Activated T-helper 1 cell treated with anti-CD3 and anti-CD28 coated beads, Interleukin-12 subunit alpha, Interleukin-12 subunit beta, Interleukin-2, Interleukin-4 antibody, amounts not matched to agents 30 ng/mL and 10 ng/mL and 1 ng/mL, durations not matched to agents 14 hours and 24 hours and 36 hours (primary cell): ENCODE measurements at regions of chrX and their contacts with region 1.

Region 1: GRCh38 chrX:119606280-119607015 is at the start of gene NKRF:
- DNase-seq: peak; percentile 86
- H3K4me3 Mint-ChIP-seq: peak within 1 kb of the TSS; percentile 96
- H3K27ac Mint-ChIP-seq: peak within 1 kb of the TSS; percentile 97
- H3K4me1 Mint-ChIP-seq: peaks cover 30% of the 10 kb centered on the region
- H3K27me3 Mint-ChIP-seq: no peaks in the 10 kb centered on the region
- total RNA-seq, gene NKRF: 26.8 and 29.0 TPM in 2 replicates

Region 2: GRCh38 chrX:119468930-119469635 is 137.4 kb before region 1 on chrX:
- intact Hi-C with region 1: loop called (anchors 1 kb)
- DNase-seq: peak; percentile 83
- H3K4me3 Mint-ChIP-seq: peak overlapping the region; percentile 90
- H3K27ac Mint-ChIP-seq: peak overlapping the region; percentile 93
- H3K4me1 Mint-ChIP-seq: peaks cover 12% of the 10 kb centered on the region
- H3K27me3 Mint-ChIP-seq: no peaks in the 10 kb centered on the region

Region 3: GRCh38 chrX:119565107-119565663 is 41.3 kb before region 1 on chrX and contains the start of gene STEEP1:
- intact Hi-C with region 1: loop called (anchors 2 kb)
- DNase-seq: peak; percentile 80
- H3K4me3 Mint-ChIP-seq: peak within 1 kb of the TSS; percentile 93
- H3K27ac Mint-ChIP-seq: peak within 1 kb of the TSS; percentile 92
- H3K4me1 Mint-ChIP-seq: peaks cover 15% of the 10 kb centered on the region
- H3K27me3 Mint-ChIP-seq: peaks cover 2% of the 10 kb centered on the region
- total RNA-seq, gene STEEP1: 25.0 and 25.9 TPM in 2 replicates

Region 4: GRCh38 chrX:119624951-119625668 is 18.7 kb after region 1 on chrX:
- intact Hi-C with region 1: no loop called
- DNase-seq: no peak
- H3K4me3 Mint-ChIP-seq: no peak overlapping the region
- H3K27ac Mint-ChIP-seq: no peak overlapping the region
- H3K4me1 Mint-ChIP-seq: no peaks in the 10 kb centered on the region
- H3K27me3 Mint-ChIP-seq: no peaks in the 10 kb centered on the region

Region 5: DNA sequence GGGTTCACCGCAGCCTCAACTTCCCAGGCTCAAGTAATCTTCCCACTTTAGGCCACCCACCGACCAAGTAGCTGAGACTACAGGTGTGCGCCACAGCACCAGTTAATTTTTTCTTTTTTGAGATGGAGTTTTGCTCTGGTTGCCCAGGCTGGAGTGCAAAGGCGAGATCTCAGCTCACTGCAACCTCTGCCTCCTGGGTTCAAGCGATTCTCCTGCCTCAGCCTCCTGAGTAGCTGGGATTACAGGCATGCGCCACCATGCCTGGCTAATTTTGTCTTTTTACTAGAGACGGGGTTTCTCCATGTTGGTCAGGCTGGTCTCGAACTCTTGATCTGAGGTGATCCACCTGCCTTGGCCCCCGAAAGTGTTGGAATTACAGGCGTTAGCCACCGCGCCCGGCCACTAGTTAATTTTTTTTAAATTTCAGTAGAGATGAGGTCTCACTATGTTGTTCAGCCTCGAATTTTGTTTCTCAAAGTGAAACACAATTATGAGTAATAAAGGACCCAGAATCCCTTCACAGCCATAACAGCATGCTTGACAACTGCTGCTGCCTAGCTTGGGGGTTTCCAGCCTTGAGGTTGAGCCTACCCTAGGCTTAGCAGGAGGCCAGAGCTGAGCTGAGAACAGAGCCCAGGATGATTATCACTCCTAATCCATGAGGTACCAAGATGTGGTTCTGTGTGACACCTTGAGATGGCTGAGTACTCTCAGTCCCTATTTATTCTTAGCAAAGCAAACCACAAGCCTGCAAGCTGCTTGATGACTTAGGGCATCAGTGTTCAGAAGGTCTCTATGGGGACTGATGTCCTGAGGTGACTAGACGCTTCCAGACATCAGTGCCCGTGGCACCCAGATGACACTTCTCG is 41.3 kb after region 1 on chrX:
- intact Hi-C with region 1: loop called (anchors 1 kb)
- DNase-seq: peak; percentile 62
- H3K4me3 Mint-ChIP-seq: peak overlapping the region; percentile 66
- H3K27ac Mint-ChIP-seq: peak overlapping the region; percentile 91
- H3K4me1 Mint-ChIP-seq: peaks cover 22% of the 10 kb centered on the region
- H3K27me3 Mint-ChIP-seq: no peaks in the 10 kb centered on the region

Region 6: GRCh38 chrX:119729408-119730201 is 123.2 kb after region 1 on chrX:
- intact Hi-C with region 1: loop called (anchors 1 kb)
- DNase-seq: peak; percentile 28
- H3K4me3 Mint-ChIP-seq: no peak overlapping the region
- H3K27ac Mint-ChIP-seq: no peak overlapping the region
- H3K4me1 Mint-ChIP-seq: peaks cover 6% of the 10 kb centered on the region
- H3K27me3 Mint-ChIP-seq: peaks cover 2% of the 10 kb centered on the region

Region 7: DNA sequence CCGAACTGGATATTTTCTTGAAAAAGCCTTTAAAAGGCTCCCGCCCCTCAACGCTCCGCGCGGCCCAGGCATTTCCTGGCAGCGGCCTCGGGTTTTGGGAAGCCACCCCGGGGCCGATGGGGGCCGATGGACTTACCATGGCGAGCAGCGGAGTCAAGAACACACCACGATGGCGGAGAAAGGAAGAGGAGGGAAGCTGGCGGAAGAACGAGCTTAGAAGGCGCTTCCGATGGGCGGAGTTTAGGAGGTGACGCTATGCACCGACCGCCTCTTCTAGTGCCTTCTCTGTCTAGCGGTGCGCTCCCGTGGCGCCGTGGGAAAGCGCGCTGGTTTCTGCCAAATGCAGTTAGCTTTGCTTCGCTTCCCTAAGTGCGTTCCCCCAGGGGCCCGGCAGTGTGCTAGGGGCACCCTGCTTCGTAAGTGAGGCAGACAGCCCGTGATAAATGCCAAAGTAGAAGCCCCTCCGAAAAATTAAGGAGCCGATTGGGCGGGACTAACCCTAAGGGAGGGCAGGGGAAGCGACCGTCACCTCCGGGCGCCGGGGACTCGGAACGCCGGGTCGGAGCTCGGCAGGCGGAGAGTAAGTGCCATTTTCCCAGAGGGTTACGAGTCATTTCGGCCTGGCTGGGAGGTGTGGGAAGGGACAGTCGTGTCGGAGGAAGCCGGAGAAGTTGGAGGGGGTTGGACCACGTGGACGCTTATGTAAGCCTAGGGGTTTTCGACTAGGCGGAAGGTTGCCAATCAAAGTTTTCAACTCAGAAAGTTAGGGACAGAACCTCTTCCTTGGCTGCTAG is 185.2 kb after region 1 on chrX and contains the start of gene RPL39:
- intact Hi-C with region 1: loop called (anchors 2 kb)
- DNase-seq: peak; percentile 75
- H3K4me3 Mint-ChIP-seq: peak within 1 kb of the TSS; percentile 96
- H3K27ac Mint-ChIP-seq: peak within 1 kb of the TSS; percentile 95
- H3K4me1 Mint-ChIP-seq: peaks cover 10% of the 10 kb centered on the region
- H3K27me3 Mint-ChIP-seq: no peaks in the 10 kb centered on the region
- total RNA-seq, gene RPL39: 1,853 and 1,912 TPM in 2 replicates